AG04449 (cell line): ENCODE measurements at regions of chr1 and their contacts with region 1.

Region 1: DNA sequence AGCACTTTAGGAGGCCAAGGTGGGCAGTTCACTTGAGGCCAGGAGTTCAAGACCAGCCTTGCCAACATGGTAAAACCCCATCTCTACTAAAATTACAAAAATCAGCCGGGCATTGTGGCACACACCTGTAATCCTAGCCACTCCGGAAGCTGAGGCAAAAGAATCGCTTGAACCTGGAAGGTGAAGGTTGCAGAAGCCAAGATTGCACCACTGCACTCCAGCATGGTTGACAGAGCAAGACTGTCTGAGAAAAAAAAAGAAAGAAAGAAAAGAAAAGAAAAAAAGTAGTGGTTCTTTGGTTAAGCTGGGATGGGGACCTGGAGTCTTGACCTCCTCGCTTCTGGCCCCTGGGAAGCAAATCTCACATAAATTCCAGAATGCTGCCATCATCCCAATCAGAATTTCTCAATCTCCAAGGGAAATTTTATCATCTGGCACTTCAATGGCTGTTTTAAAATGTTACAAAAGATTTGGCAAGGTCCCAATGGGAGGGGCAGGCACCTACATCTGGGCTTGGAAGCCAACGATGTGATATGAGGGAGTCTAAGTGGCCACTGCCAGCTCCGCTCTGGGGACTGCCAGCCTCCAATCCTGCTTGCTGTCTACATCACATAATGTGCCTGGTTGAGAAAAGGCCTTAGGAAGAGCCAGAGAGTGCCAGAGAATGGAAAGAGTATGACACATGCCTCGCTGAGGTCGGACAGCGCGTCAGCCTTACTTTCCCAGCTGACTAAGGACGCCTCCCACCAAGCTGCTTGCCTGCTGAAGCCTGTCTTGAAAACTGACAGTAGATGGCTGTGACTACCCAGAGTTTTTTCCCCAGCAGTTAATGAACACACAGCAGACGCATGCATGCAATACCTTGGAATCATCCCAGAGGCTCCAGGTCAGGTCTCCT is 42.1 kb upstream of the SRP9 start:
- DNase-seq: peak; percentile 92
- H3K4me3 ChIP-seq: peak overlapping the region; percentile 27; the same call in 1 of the 2 replicates
- CTCF ChIP-seq: no peak

Region 2: GRCh38 chr1:225746361-225747179 is 11.1 kb after region 1 on chr1:
- CTCF ChIA-PET with region 1: interaction called, 8 read pairs
- POLR2A ChIA-PET with region 1: interaction called, 11 read pairs
- DNase-seq: no peak
- H3K4me3 ChIP-seq: peak overlapping the region; percentile 50
- CTCF ChIP-seq: peak; percentile 11